Activated CD4-positive, alpha-beta memory T cell treated with anti-CD3 and anti-CD28 coated beads for 36 hours (primary cell): ENCODE measurements at regions of chr19 and their contacts with region 1.

Region 1: DNA sequence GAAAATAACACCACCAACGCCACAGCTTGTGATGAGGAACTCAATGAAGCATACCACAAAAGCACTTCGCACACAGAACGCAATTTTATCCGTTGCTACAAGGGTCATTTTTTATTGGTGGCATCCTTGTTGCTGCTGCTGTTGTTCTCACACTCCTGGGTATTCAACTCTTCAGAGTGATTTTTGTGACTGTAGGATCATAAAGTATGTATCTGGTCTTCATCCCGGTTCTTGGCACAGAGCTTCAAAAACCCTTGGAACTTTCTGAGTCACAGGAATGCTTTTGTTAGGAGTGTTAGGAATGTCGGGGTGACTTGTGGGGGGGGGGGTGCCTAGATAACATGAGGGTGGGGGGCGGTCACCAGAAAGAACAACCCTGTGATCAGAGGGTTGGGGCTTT is 108.4 kb downstream of the ZNF557 start:
- DNase-seq: no peak
- H3K4me3 Mint-ChIP-seq: no peak overlapping the region
- H3K27ac Mint-ChIP-seq: no peak overlapping the region
- H3K4me1 Mint-ChIP-seq: peaks cover 18% of the 10 kb centered on the region
- H3K27me3 Mint-ChIP-seq: peaks cover 3% of the 10 kb centered on the region

Region 2: DNA sequence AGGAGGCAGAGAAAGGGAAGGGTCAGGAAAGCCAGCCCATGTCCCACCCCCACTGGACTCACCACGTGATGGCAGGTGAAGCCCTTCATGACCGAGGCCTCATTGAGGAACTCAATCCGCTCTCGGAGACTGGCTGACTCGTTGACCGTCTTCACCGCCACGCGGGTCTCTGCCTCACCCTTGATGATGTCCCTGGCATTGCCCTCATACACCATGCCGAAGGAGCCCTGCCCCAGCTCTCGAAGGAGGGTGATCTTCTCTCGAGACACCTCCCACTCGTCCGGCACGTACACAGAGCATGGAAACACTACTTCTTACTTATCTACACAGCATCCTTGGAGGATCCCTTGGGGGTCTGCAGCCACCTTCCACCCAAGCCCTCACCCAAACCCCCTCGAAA is 52.7 kb before region 1 on chr19:
- CTCF ChIA-PET with region 1: no interaction called
- POLR2A ChIA-PET with region 1: no interaction called
- intact Hi-C with region 1: no loop called
- DNase-seq: no peak
- H3K4me3 Mint-ChIP-seq: no peak overlapping the region
- H3K27ac Mint-ChIP-seq: no peak overlapping the region
- H3K4me1 Mint-ChIP-seq: no peaks in the 10 kb centered on the region
- H3K27me3 Mint-ChIP-seq: no peaks in the 10 kb centered on the region

Region 3: DNA sequence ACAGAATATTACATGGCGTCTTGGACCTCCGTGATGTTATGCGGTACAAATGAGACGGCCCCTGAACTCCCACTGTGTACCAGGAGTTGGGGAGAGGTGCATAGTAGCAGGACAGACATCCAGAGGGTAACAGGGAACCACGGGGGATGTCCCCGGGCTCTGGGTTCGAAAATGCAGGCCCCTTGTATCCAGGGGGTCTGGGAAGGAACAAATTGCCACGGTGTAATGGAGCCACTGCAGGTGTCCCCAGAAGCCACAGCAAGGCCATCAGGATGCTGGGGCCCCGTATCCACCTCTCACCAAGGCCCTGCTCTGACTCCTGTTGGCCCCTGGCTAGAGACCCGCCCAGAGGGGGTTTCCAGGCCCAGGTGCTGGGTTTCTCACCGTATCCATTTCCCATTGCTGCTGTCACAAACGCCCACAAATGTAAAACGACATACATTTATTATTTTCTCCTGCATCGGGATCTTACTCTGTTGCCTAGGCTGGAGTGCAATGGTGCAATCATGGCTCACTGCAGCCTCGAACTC is 38.5 kb after region 1 on chr19:
- CTCF ChIA-PET with region 1: interaction called, 3 read pairs
- POLR2A ChIA-PET with region 1: no interaction called
- intact Hi-C with region 1: loop called (anchors 5 kb)
- DNase-seq: peak; percentile 79
- H3K4me3 Mint-ChIP-seq: no peak overlapping the region
- H3K27ac Mint-ChIP-seq: no peak overlapping the region
- H3K4me1 Mint-ChIP-seq: peaks cover 42% of the 10 kb centered on the region
- H3K27me3 Mint-ChIP-seq: peaks cover 12% of the 10 kb centered on the region

Region 4: GRCh38 chr19:7294571-7295212 is 116.8 kb after region 1 on chr19:
- CTCF ChIA-PET with region 1: no interaction called
- POLR2A ChIA-PET with region 1: no interaction called
- intact Hi-C with region 1: no loop called
- DNase-seq: peak; percentile 54
- H3K4me3 Mint-ChIP-seq: peak overlapping the region; percentile 70
- H3K27ac Mint-ChIP-seq: no peak overlapping the region
- H3K4me1 Mint-ChIP-seq: peaks cover 6% of the 10 kb centered on the region
- H3K27me3 Mint-ChIP-seq: peaks cover 41% of the 10 kb centered on the region